Activated CD4-positive, alpha-beta memory T cell treated with anti-CD3 and anti-CD28 coated beads, Interleukin-2, amount 10 ng/mL, durations not matched to agents 7 days and 5 days (primary cell): ENCODE measurements at regions of chr15 and their contacts with region 1.

Region 1: DNA sequence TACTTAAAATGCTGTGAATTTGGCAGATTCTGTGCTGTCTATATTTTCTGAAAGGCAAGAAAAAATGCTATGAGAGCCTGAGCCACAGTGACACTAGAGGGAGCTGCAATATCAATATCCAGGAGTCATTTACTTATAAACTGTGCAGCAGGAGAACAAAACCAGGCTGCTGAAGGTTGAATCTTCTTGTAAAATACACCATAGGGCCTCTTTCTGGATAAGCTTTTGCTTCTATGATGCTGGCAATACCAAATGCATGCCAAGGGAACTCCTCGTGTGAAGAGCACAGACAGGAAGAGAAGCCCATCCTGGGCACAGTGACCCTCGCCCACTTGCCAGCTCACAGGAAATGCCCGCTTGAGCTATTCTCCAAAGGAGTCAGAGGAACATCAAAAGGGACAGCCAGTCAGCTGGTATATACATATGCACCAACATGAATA is 48.0 kb upstream of the TSPAN3 start:
- DNase-seq: peak; percentile 35
- H3K4me3 Mint-ChIP-seq: no peak overlapping the region
- H3K27ac Mint-ChIP-seq: no peak overlapping the region
- H3K4me1 Mint-ChIP-seq: peaks cover 4% of the 10 kb centered on the region
- H3K27me3 Mint-ChIP-seq: peaks cover 2% of the 10 kb centered on the region

Region 2: DNA sequence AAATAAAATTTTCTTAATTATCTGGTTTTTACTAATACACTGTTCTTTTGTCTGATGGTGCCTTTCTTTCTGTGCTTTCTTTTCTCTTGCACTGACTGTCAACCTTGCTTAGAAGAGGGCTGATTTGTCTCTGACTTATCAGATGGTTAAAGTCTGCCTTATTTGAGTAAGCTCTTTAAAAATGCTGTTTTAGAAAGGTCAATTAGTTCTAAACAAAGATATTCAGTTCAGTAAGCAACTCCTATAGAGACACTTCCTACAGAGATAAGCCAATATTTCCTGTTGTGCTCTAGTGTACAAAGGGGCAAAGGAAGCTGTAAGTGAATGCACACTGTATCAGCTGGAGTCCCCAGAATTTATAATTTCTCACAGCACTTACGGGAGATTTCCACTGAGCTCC is 105.5 kb after region 1 on chr15:
- CTCF ChIA-PET with region 1: no interaction called
- POLR2A ChIA-PET with region 1: no interaction called
- DNase-seq: no peak
- H3K4me3 Mint-ChIP-seq: no peak overlapping the region
- H3K27ac Mint-ChIP-seq: no peak overlapping the region
- H3K4me1 Mint-ChIP-seq: peaks cover 7% of the 10 kb centered on the region
- H3K27me3 Mint-ChIP-seq: no peaks in the 10 kb centered on the region

Region 3: GRCh38 chr15:77496710-77497103 is 377.8 kb after region 1 on chr15:
- CTCF ChIA-PET with region 1: interaction called, 24 read pairs
- POLR2A ChIA-PET with region 1: no interaction called
- DNase-seq: peak; percentile 71
- H3K4me3 Mint-ChIP-seq: no peak overlapping the region
- H3K27ac Mint-ChIP-seq: no peak overlapping the region
- H3K4me1 Mint-ChIP-seq: peaks cover 17% of the 10 kb centered on the region
- H3K27me3 Mint-ChIP-seq: no peaks in the 10 kb centered on the region